SK-N-SH (cell line): ENCODE measurements at regions of chr17 and their contacts with region 1.

Region 1: GRCh38 chr17:17496189-17497064 is at the start of gene RASD1:
- DNase-seq: peak; percentile 98
- H3K4me3 ChIP-seq: peak within 1 kb of the TSS; percentile 63 to 76
- H3K27ac ChIP-seq: peak within 1 kb of the TSS; percentile 44 to 60; a peak in 3 of 4 replicates
- H3K4me1 ChIP-seq: peaks cover 0 to 7% of the 10 kb centered on the region in 2 experiments; a peak in 1 of 4 replicates
- H3K27me3 ChIP-seq: no peaks in the 10 kb centered on the region
- CTCF ChIP-seq: peak; percentile 75
- EP300 ChIP-seq: no peak
- RAD21 ChIP-seq: peak; percentile 78
- polyA plus RNA-seq, gene RASD1: 0.26 and 0.43 TPM in 2 replicates

Region 2: GRCh38 chr17:17416007-17416399 is 80.4 kb before region 1 on chr17:
- CTCF ChIA-PET with region 1: no interaction called
- POLR2A ChIA-PET with region 1: no interaction called
- DNase-seq: peak; percentile 66
- H3K4me3 ChIP-seq: no peak overlapping the region
- H3K27ac ChIP-seq: peak overlapping the region in 1 of 2 experiments; percentile 15; a peak in 2 of 4 replicates
- H3K4me1 ChIP-seq: peaks cover 0 to 11% of the 10 kb centered on the region in 2 experiments; a peak in 2 of 4 replicates
- H3K27me3 ChIP-seq: no peaks in the 10 kb centered on the region
- CTCF ChIP-seq: no peak
- EP300 ChIP-seq: no peak
- RAD21 ChIP-seq: no peak

Region 3: GRCh38 chr17:17511881-17512858 is 15.7 kb after region 1 on chr17:
- CTCF ChIA-PET with region 1: interaction called, 32 read pairs
- POLR2A ChIA-PET with region 1: interaction called, 6 read pairs
- DNase-seq: no peak
- H3K4me3 ChIP-seq: no peak overlapping the region
- H3K27ac ChIP-seq: no peak overlapping the region
- H3K4me1 ChIP-seq: peaks cover 6 to 37% of the 10 kb centered on the region in 2 experiments; a peak in 2 of 4 replicates
- H3K27me3 ChIP-seq: no peaks in the 10 kb centered on the region
- CTCF ChIP-seq: no peak
- EP300 ChIP-seq: no peak
- RAD21 ChIP-seq: no peak

Region 4: DNA sequence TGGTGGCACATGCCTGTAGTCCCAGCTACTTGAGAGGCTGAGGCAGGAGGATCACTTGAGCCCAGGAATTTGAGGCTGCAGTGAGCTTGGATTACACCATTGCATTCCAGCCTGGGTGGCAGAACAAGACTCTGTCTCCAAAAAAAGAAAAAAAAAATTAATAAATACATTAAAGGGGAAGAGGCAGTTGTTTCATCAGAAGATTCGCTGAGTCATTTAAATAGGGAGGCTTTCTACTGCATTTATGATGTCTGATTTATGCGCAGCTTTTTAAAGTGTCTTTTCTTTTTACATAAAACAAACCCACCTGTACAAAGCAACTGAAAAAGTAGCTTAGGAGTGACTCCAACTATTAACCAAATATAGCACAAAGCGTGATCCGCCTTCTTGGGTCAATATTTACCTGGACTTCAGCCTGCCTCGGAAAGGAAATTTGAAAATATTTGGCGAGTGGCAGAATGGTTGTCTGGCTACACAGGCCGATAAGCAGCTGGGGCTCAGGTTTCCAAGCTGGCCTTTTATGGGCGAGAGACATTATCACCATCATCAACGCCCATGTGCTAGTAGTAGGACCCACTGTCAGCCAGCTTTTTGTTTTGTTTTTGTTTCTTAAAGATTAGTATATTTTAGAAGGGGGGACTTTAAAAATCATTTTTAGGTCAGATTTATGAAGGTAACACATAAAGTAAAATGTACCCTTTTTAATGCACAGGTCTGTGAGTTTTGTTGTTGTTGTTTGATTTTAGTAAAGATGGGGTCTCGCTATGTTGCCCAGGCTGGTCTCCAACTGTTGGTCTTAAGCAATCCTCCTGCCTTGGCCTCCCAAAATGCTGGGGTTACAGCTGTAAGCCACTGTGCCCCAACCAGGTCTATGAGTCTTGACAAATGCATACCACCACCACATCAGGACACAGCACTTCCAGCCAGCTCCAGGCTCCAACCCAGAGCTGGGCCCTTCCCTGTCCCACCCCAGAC is 42.3 kb after region 1 on chr17:
- CTCF ChIA-PET with region 1: interaction called, 15 read pairs
- POLR2A ChIA-PET with region 1: interaction called, 5 read pairs
- DNase-seq: no peak
- H3K4me3 ChIP-seq: no peak overlapping the region
- H3K27ac ChIP-seq: no peak overlapping the region
- H3K4me1 ChIP-seq: peaks cover 0 to 65% of the 10 kb centered on the region in 2 experiments; a peak in 1 of 4 replicates
- H3K27me3 ChIP-seq: no peaks in the 10 kb centered on the region
- CTCF ChIP-seq: no peak
- EP300 ChIP-seq: no peak
- RAD21 ChIP-seq: no peak

Region 5: DNA sequence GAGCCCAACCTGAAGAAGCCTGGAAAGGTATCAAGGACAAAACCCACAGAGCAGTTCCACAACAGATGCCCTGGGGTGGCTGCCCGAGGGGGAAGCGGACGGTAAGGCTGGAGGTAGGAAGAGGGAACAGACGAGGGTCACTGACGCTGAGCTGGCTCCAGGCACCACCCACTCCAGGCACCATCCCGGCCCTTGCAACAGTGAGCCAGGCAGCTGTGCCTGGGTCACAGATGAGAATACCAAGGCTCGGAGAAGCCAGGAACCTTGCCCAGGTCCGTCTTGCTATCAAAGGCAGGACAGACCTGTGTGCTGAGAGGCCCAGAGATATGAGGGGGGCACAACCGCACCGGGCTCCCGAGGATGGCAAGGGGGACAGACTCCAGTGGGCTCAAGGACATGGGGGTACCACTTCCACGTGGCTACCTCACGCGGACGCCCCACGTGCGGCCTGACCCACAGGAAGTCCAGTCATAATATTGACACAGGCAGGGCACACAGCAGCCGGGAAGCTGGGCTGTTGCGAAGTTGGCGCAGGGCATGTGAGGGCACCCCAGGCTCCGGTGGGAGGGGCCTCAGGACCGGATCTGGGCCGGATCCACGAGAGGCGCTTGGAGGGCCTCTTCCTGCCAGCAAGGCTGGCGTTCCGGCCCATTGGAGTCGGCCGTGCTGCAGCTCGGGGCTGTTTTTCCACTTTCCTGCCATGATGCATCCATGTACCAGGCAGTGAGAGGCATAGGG is 65.2 kb after region 1 on chr17:
- CTCF ChIA-PET with region 1: interaction called, 185 read pairs
- POLR2A ChIA-PET with region 1: interaction called, 6 read pairs
- DNase-seq: no peak
- H3K4me3 ChIP-seq: no peak overlapping the region
- H3K27ac ChIP-seq: no peak overlapping the region
- H3K4me1 ChIP-seq: peaks cover 0 to 15% of the 10 kb centered on the region in 2 experiments; a peak in 1 of 4 replicates
- H3K27me3 ChIP-seq: no peaks in the 10 kb centered on the region
- CTCF ChIP-seq: no peak
- EP300 ChIP-seq: no peak
- RAD21 ChIP-seq: no peak

Region 6: GRCh38 chr17:17591355-17592298 is 95.2 kb after region 1 on chr17 and contains the start of gene PEMT:
- CTCF ChIA-PET with region 1: interaction called, 10 read pairs
- POLR2A ChIA-PET with region 1: interaction called, 8 read pairs
- DNase-seq: peak; percentile 96
- H3K4me3 ChIP-seq: peak within 1 kb of the TSS; percentile 85 to 88
- H3K27ac ChIP-seq: peak within 1 kb of the TSS; percentile 77 to 92
- H3K4me1 ChIP-seq: peaks cover 4 to 21% of the 10 kb centered on the region in 2 experiments; a peak in 1 of 4 replicates
- H3K27me3 ChIP-seq: no peaks in the 10 kb centered on the region
- CTCF ChIP-seq: no peak
- EP300 ChIP-seq: no peak
- RAD21 ChIP-seq: no peak
- polyA plus RNA-seq, gene PEMT: 49.8 and 52.8 TPM in 2 replicates